ENCODE measurements at regions of chr3 and their contacts with region 1.

Region 1: DNA sequence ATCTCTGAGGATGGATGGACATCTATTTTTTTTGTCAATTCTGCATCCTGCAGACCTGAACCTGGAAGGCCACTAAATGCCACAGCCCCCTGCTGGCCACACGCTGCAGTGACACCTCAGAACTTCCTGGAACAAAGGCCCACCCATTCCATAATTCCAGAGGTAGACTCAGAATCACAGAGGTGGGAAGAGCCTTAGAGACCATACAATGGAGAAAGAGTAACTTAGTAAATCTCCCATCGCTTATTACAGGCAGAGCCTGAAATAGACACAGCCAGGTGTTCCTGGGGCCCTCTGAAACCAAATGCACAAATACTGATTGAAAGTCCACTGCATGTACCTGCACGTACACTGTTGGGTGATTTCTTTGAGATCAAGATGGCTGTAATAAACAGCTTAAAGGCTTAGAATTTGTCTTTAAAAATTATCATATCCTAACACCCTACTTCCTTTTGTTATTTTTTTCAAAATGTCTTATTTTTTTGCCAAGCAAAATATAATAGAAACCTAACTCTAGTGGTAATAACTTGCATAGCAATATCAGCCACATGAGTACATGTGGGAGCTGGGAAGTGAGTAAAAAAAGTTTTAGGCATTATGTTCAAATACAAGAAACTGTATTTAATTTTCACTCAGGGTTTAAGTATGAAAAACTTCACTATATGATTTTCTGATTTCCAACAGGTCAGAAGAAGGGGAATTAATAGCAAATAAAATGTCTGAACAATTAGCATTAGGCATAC is 62.7 kb downstream of the EOMES start:
- DNase-seq: peak in 4 of 5 donors; percentile 29 to 42 (median 38)
- H3K4me3 ChIP-seq: no peak overlapping the region
- H3K4me3 Mint-ChIP-seq: no peak overlapping the region
- H3K27ac ChIP-seq: no peak overlapping the region
- H3K27ac Mint-ChIP-seq: peak overlapping the region in 1 of 7 donors; percentile 30
- H3K4me1 ChIP-seq: no peaks in the 10 kb centered on the region
- H3K4me1 Mint-ChIP-seq: peaks cover 9 to 15% (median 11%) of the 10 kb centered on the region in 4 donors
- H3K27me3 ChIP-seq: no peaks in the 10 kb centered on the region
- H3K27me3 Mint-ChIP-seq: peaks cover 0 to 2% of the 10 kb centered on the region in 2 donors

Region 2: GRCh38 chr3:27312044-27312668 is 347.3 kb before region 1 on chr3:
- CTCF ChIA-PET with region 1: interaction called, 6 read pairs
- POLR2A ChIA-PET with region 1: no interaction called
- intact Hi-C with region 1: loop called (anchors 1 kb)
- DNase-seq: peak in 4 of 5 donors; percentile 52 to 60 (median 59)
- H3K4me3 ChIP-seq: no peak overlapping the region
- H3K4me3 Mint-ChIP-seq: no peak overlapping the region
- H3K27ac ChIP-seq: no peak overlapping the region
- H3K27ac Mint-ChIP-seq: peak overlapping the region in 1 of 7 donors; percentile 5
- H3K4me1 ChIP-seq: no peaks in the 10 kb centered on the region
- H3K4me1 Mint-ChIP-seq: no peaks in the 10 kb centered on the region
- H3K27me3 ChIP-seq: no peaks in the 10 kb centered on the region
- H3K27me3 Mint-ChIP-seq: no peaks in the 10 kb centered on the region

Region 3: GRCh38 chr3:27357665-27358258 is 301.7 kb before region 1 on chr3:
- CTCF ChIA-PET with region 1: interaction called, 6 read pairs
- POLR2A ChIA-PET with region 1: no interaction called
- intact Hi-C with region 1: loop called (anchors 1 kb)
- DNase-seq: peak; percentile 47 to 59 (median 53)
- H3K4me3 ChIP-seq: no peak overlapping the region
- H3K4me3 Mint-ChIP-seq: peak overlapping the region in 6 of 8 donors; percentile 14 to 74 (median 30)
- H3K27ac ChIP-seq: no peak overlapping the region
- H3K27ac Mint-ChIP-seq: peak overlapping the region in 1 of 7 donors; percentile 58
- H3K4me1 ChIP-seq: peaks cover 34% of the 10 kb centered on the region
- H3K4me1 Mint-ChIP-seq: peaks cover 28 to 60% (median 40%) of the 10 kb centered on the region in 4 donors
- H3K27me3 ChIP-seq: no peaks in the 10 kb centered on the region
- H3K27me3 Mint-ChIP-seq: no peaks in the 10 kb centered on the region

Region 4: GRCh38 chr3:27561576-27561975 is 97.9 kb before region 1 on chr3:
- CTCF ChIA-PET with region 1: no interaction called
- POLR2A ChIA-PET with region 1: no interaction called
- intact Hi-C with region 1: no loop called
- DNase-seq: no peak
- H3K4me3 ChIP-seq: no peak overlapping the region
- H3K4me3 Mint-ChIP-seq: no peak overlapping the region
- H3K27ac ChIP-seq: no peak overlapping the region
- H3K27ac Mint-ChIP-seq: no peak overlapping the region
- H3K4me1 ChIP-seq: no peaks in the 10 kb centered on the region
- H3K4me1 Mint-ChIP-seq: no peaks in the 10 kb centered on the region
- H3K27me3 ChIP-seq: no peaks in the 10 kb centered on the region
- H3K27me3 Mint-ChIP-seq: no peaks in the 10 kb centered on the region

Region 5: DNA sequence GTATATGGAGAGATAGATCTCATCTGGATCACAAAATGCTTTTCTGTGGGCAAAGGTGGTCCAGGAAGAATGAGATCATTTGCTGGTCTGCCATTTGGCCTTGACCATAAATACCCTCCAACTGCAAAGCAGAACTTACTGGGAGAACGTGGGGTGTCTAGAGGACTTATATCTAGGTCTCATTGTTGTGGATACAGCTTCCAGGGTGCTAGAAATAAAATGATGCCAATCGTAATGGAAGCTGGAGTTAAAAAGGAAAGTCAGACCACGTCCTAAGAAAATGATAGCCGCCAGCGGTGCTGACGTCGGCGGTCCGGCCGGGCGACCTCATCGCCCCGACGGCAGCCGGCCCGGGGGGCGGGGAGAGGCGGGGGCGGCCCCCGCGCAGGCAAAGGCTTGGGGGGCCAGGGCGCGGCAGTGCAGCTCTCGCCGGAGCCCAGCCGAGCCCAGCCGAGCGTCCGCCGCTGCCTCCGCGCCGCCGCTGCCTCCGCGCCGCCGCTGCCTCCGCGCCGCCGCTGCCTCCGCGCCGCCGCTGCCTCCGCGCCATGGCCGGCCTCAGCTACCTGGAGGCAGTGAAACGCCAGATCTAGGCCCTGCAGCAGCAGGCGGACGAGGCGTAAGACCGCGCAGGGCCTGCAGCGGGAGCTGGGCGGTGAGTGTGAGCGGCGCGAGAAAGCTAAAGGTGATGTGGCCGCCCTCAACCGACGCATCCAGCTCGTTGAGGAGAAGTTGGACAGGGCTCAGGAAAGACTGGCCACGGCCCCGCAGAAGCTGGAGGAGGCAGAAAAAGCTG is 26.8 kb before region 1 on chr3:
- CTCF ChIA-PET with region 1: interaction called, 7 read pairs
- POLR2A ChIA-PET with region 1: no interaction called
- intact Hi-C with region 1: loop called (anchors 1 kb)
- DNase-seq: peak; percentile 50 to 57 (median 53)
- H3K4me3 ChIP-seq: peak overlapping the region; percentile 8 to 64
- H3K4me3 Mint-ChIP-seq: peak overlapping the region; percentile 90 to 98 (median 94)
- H3K27ac ChIP-seq: peak overlapping the region; percentile 66
- H3K27ac Mint-ChIP-seq: peak overlapping the region; percentile 88 to 98 (median 96)
- H3K4me1 ChIP-seq: peaks cover 26% of the 10 kb centered on the region
- H3K4me1 Mint-ChIP-seq: peaks cover 27 to 45% (median 34%) of the 10 kb centered on the region in 4 donors
- H3K27me3 ChIP-seq: no peaks in the 10 kb centered on the region
- H3K27me3 Mint-ChIP-seq: no peaks in the 10 kb centered on the region

Region 6: GRCh38 chr3:27644941-27645340 is 14.5 kb before region 1 on chr3:
- CTCF ChIA-PET with region 1: interaction called, 10 read pairs
- POLR2A ChIA-PET with region 1: no interaction called
- intact Hi-C with region 1: no loop called
- DNase-seq: no peak
- H3K4me3 ChIP-seq: no peak overlapping the region
- H3K4me3 Mint-ChIP-seq: no peak overlapping the region
- H3K27ac ChIP-seq: no peak overlapping the region
- H3K27ac Mint-ChIP-seq: no peak overlapping the region
- H3K4me1 ChIP-seq: peaks cover 6% of the 10 kb centered on the region
- H3K4me1 Mint-ChIP-seq: peaks cover 3 to 8% (median 4%) of the 10 kb centered on the region in 4 donors
- H3K27me3 ChIP-seq: no peaks in the 10 kb centered on the region
- H3K27me3 Mint-ChIP-seq: no peaks in the 10 kb centered on the region

Region 7: GRCh38 chr3:27844052-27844675 is 184.7 kb after region 1 on chr3:
- CTCF ChIA-PET with region 1: no interaction called
- POLR2A ChIA-PET with region 1: no interaction called
- intact Hi-C with region 1: no loop called
- DNase-seq: no peak
- H3K4me3 ChIP-seq: no peak overlapping the region
- H3K4me3 Mint-ChIP-seq: no peak overlapping the region
- H3K27ac ChIP-seq: no peak overlapping the region
- H3K27ac Mint-ChIP-seq: no peak overlapping the region
- H3K4me1 ChIP-seq: no peaks in the 10 kb centered on the region
- H3K4me1 Mint-ChIP-seq: peaks cover 0 to 12% (median 9%) of the 10 kb centered on the region in 4 donors
- H3K27me3 ChIP-seq: no peaks in the 10 kb centered on the region
- H3K27me3 Mint-ChIP-seq: peaks cover 0 to 7% of the 10 kb centered on the region in 2 donors

Region 8: GRCh38 chr3:28835751-28836150 is 1176.3 kb after region 1 on chr3:
- CTCF ChIA-PET with region 1: no interaction called
- POLR2A ChIA-PET with region 1: no interaction called
- intact Hi-C with region 1: no loop called
- DNase-seq: no peak
- H3K4me3 ChIP-seq: no peak overlapping the region
- H3K4me3 Mint-ChIP-seq: no peak overlapping the region
- H3K27ac ChIP-seq: no peak overlapping the region
- H3K27ac Mint-ChIP-seq: no peak overlapping the region
- H3K4me1 ChIP-seq: no peaks in the 10 kb centered on the region
- H3K4me1 Mint-ChIP-seq: no peaks in the 10 kb centered on the region
- H3K27me3 ChIP-seq: no peaks in the 10 kb centered on the region
- H3K27me3 Mint-ChIP-seq: no peaks in the 10 kb centered on the region

Measured in CD4-positive, alpha-beta memory T cell (primary cell).